ENCODE measurements at regions of chrX and their contacts with region 1.

Region 1: DNA sequence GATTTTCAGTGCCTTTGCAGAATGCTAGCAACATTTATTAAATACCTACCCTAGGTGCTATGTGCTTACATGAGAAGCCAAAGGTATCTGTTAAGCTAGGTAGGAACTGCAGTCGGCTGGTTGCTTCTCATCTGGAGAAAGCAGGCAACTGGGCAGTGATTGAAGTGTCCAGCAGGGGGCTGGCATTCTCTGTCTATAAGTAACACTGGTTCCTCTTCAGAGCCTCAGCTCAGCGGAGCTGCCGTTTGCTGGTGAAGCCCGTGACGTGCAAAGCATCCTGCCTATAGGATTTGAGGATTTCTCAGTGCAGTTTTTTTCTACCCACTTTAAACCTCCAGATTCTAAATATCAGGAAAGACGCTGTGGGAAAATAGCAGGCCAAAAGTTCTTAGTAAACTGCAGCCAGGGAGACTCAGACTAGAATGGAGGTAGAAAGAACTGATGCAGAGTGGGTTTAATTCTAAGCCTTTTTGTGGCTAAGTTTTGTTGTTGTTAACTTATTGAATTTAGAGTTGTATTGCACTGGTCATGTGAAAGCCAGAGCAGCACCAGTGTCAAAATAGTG is at the start of gene GRPR:
- DNase-seq: peak; percentile 74
- ATAC-seq: peak; percentile 100
- H3K4me3 ChIP-seq: no peak within 1 kb of the TSS
- H3K27ac ChIP-seq: no peak within 1 kb of the TSS
- H3K4me1 ChIP-seq: peaks cover 0 to 4% of the 10 kb centered on the region in 2 experiments; a peak in 1 of 4 replicates
- H3K27me3 ChIP-seq: no peaks in the 10 kb centered on the region
- CTCF ChIP-seq: peak; percentile 58 to 62 (median 61)
- POLR2A ChIP-seq: no peak
- RAD21 ChIP-seq: peak; percentile 78
- total RNA-seq, gene GRPR: 0.15 TPM

Region 2: GRCh38 chrX:15825936-15826335 is 297.4 kb before region 1 on chrX:
- CTCF ChIA-PET with region 1: no interaction called
- POLR2A ChIA-PET with region 1: no interaction called
- RAD21 ChIA-PET with region 1: no interaction called
- intact Hi-C with region 1: no loop called
- DNase-seq: no peak
- ATAC-seq: no peak
- H3K4me3 ChIP-seq: no peak overlapping the region
- H3K27ac ChIP-seq: no peak overlapping the region
- H3K4me1 ChIP-seq: no peaks in the 10 kb centered on the region
- H3K27me3 ChIP-seq: no peaks in the 10 kb centered on the region
- CTCF ChIP-seq: no peak
- POLR2A ChIP-seq: no peak
- RAD21 ChIP-seq: no peak

Region 3: DNA sequence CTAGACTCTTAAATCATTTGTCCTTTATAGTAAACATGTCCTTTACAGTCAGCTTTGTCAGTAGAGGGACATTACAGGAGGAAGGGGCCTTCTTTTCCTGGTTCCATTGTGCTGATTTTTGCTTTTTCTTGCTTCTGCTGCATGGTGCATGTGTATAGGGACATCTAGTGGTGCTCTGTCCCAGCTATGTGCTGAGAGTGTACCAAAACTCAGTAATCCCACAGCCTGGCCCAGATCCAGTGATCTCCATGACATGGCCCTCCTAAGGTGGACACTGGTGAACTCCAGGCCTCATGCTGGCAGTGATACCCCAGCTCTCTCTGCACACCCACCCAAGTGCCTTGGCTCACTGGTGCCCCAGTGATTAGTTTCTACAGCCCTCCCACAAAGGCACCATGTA is 89.1 kb after region 1 on chrX:
- CTCF ChIA-PET with region 1: interaction called, 24 read pairs
- POLR2A ChIA-PET with region 1: no interaction called
- RAD21 ChIA-PET with region 1: interaction called in 1 of 2 experiments, 4 read pairs
- intact Hi-C with region 1: loop called (anchors 5 kb)
- DNase-seq: peak; percentile 7
- ATAC-seq: peak; percentile 87
- H3K4me3 ChIP-seq: no peak overlapping the region
- H3K27ac ChIP-seq: no peak overlapping the region
- H3K4me1 ChIP-seq: peaks cover 0 to 12% of the 10 kb centered on the region in 2 experiments; a peak in 2 of 4 replicates
- H3K27me3 ChIP-seq: no peaks in the 10 kb centered on the region
- CTCF ChIP-seq: peak; percentile 40 to 58 (median 45); a peak in 5 of 6 replicates
- POLR2A ChIP-seq: no peak
- RAD21 ChIP-seq: peak; percentile 77

Region 4: DNA sequence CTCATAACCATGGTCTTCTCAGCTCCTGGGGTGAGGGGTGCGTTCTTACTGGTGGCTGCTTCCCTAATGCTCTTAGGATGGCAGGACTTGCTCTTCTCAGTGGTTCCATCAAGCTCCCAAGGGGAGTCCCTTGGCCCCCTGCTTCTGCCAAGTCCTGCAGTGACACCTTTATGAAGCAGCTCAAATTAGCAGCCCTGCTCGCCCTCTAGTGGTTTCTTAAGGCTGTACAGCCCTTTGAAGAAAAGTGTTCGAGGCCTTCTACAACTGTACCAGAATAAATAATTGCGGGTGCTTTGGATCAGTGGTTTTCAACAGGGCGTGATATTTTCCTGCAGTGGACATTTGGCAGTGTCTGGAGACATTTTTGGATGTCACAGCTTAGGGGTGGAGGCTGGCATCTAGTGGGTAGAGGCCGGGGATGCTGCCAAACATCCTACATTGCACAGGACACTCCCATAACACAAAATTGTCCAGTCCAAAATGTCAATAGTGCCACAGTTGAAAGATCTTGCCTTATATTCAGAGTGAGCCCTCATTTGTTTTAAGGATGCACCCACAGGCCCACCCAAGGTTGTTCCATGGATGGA is 322.0 kb after region 1 on chrX:
- CTCF ChIA-PET with region 1: interaction called, 7 read pairs
- POLR2A ChIA-PET with region 1: no interaction called
- RAD21 ChIA-PET with region 1: no interaction called
- intact Hi-C with region 1: loop called (anchors 10 kb)
- DNase-seq: peak; percentile 22
- ATAC-seq: peak; percentile 88
- H3K4me3 ChIP-seq: no peak overlapping the region
- H3K27ac ChIP-seq: no peak overlapping the region
- H3K4me1 ChIP-seq: no peaks in the 10 kb centered on the region
- H3K27me3 ChIP-seq: no peaks in the 10 kb centered on the region
- CTCF ChIP-seq: peak; percentile 50 to 75 (median 63); a peak in 5 of 6 replicates
- POLR2A ChIP-seq: no peak
- RAD21 ChIP-seq: peak; percentile 58

Region 5: DNA sequence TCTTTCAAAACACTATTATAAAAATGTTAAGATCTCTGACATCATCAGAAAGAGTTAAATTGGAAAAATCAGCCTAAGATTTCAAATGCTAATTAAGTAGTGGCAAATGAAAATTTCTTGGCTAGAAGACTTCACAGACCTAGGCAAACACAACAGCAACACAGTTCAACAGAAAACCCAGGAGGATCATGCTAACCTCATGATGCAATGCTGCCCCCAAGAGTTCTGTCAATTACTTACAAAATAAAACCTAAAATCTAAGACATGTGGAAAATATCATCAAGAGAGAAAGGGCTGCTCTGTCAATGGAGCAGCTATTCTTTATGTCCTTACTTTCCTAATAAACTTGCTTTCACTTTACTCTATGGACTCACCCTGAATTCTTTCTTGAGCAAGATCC is 547.7 kb after region 1 on chrX:
- CTCF ChIA-PET with region 1: no interaction called
- POLR2A ChIA-PET with region 1: no interaction called
- RAD21 ChIA-PET with region 1: no interaction called
- intact Hi-C with region 1: loop called (anchors 5 kb)
- DNase-seq: peak; percentile 12
- ATAC-seq: 0 out of 2 replicates have a peak, but pooled peaks have one; percentile 38
- H3K4me3 ChIP-seq: no peak overlapping the region
- H3K27ac ChIP-seq: no peak overlapping the region
- H3K4me1 ChIP-seq: no peaks in the 10 kb centered on the region
- H3K27me3 ChIP-seq: no peaks in the 10 kb centered on the region
- CTCF ChIP-seq: peak in 2 of 3 experiments; percentile 18 to 22; a peak in 2 of 6 replicates
- POLR2A ChIP-seq: no peak
- RAD21 ChIP-seq: peak; percentile 64

Region 6: GRCh38 chrX:17032351-17032750 is 909.0 kb after region 1 on chrX:
- CTCF ChIA-PET with region 1: no interaction called
- POLR2A ChIA-PET with region 1: no interaction called
- RAD21 ChIA-PET with region 1: no interaction called
- intact Hi-C with region 1: no loop called
- DNase-seq: no peak
- ATAC-seq: no peak
- H3K4me3 ChIP-seq: no peak overlapping the region
- H3K27ac ChIP-seq: no peak overlapping the region
- H3K4me1 ChIP-seq: no peaks in the 10 kb centered on the region
- H3K27me3 ChIP-seq: no peaks in the 10 kb centered on the region
- CTCF ChIP-seq: no peak
- POLR2A ChIP-seq: no peak
- RAD21 ChIP-seq: no peak

Measured in HCT116 (cell line).